ENCODE measurements at regions of chr20 and their contacts with region 1.

Region 1: DNA sequence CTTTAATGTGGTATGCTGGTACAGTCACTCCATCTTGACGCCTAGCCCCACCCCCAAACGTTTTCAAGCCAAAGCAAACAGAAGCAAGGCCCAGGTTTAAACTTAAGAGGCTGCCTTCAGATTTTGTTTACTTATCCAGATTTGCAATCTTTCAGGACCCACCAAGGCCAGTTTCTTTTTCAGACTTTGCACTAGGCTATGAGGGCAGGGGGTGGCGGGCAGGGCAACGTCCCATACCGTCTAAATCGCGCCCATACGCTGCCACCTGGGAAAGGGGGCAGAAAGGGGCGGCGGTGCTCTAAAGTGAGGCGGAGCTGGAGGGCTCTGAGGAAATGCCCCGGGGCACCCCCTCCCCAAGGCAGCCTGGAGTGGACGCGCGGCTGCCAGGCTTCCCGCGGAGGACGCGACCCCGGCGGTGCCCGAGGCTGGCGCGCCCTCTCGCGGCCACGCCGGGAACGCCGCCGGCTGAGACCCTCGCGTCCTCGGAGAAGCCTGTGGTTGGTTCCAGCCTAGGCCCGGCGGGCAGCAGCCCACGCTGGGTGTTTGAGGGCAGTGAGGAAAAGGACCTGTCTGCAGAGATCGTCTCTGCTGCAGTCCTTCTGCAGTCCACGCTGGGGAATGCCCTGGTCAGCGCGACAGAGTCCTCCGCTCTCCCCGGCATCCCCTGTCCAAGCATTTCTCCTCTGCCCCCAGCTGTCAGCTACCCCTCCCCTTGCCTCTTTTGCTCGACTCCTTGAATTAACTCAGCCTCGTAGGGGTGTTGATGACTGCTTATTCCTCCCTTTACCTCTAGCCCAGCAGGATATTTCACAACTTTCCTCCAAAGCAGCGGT is 129.2 kb upstream of the PRND start:
- DNase-seq: peak in 9 of 10 donors; percentile 15 to 93 (median 52)

Region 2: DNA sequence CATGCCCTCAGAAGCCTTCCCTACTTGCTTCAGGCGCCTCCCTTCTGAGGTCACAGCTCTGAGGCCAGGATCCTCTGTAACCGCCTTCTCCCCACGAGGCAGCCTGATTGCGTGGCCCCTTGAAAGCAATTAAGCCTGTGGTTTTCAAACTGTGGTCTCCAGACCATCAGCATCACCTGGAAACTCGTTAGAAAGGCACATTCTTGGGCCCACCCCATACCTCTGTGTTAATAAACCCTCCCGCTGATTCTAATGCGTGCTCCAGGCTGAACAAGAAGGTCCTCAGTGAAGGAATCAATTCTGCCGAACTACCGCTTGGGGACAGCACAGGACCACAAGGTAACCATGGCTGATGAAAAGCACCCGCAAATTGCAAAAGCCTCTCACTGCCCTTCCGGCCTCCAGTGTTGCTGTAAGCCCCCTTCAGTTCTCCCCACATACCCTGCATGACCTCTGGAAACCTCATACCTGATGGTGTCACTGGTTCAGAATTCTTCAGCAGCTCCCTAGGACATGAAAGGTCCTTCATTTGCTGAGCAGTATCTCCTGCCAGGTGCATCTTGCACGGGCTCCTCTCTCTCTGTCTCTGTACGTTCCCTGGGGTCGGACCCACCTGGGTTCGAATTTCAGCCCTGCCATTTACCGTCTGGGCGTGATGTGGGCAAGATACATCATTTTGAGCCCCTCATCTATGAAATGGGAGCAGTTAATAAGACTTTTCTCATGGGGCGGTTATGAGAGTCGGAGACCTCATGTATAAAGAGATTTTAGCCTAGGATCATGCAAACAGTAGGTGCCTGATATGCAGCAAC is 483.8 kb before region 1 on chr20:
- intact Hi-C with region 1: loop called (anchors 5 kb)
- DNase-seq: peak in 9 of 10 donors; percentile 30 to 94 (median 71)

Measured in posterior cingulate gyrus (tissue), 11 donors.